Heart right ventricle (tissue), 16 donors: ENCODE measurements at regions of chr4 and their contacts with region 1.

Region 1: GRCh38 chr4:151340751-151341385 is 15.5 kb upstream of the SH3D19 start:
- DNase-seq: no peak
- ATAC-seq: no peak
- H3K4me3 ChIP-seq: no peak overlapping the region
- H3K27ac ChIP-seq: no peak overlapping the region
- H3K4me1 ChIP-seq: no peaks in the 10 kb centered on the region
- H3K27me3 ChIP-seq: no peaks in the 10 kb centered on the region
- CTCF ChIP-seq: no peak

Region 2: GRCh38 chr4:151117371-151117962 is 223.4 kb before region 1 on chr4:
- intact Hi-C with region 1: loop called in 1 of 10 experiments (anchors 10 kb)
- DNase-seq: peak in 1 of 2 donors; percentile 68
- ATAC-seq: peak in 7 of 8 donors; percentile 47 to 66 (median 59)
- H3K4me3 ChIP-seq: no peak overlapping the region
- H3K27ac ChIP-seq: peak overlapping the region in 4 of 10 donors; percentile 20 to 42 (median 34)
- H3K4me1 ChIP-seq: peaks cover 0 to 24% (median 9%) of the 10 kb centered on the region in 9 donors
- H3K27me3 ChIP-seq: no peaks in the 10 kb centered on the region
- CTCF ChIP-seq: peak; percentile 41 to 85 (median 77)

Region 3: GRCh38 chr4:151129801-151130200 is 211.1 kb before region 1 on chr4:
- intact Hi-C with region 1: loop called in 1 of 10 experiments (anchors 10 kb)
- DNase-seq: no peak
- ATAC-seq: peak in 1 of 8 donors; percentile 56
- H3K4me3 ChIP-seq: no peak overlapping the region
- H3K27ac ChIP-seq: peak overlapping the region in 3 of 10 donors; percentile 7 to 20 (median 8)
- H3K4me1 ChIP-seq: peaks cover 0 to 3% (median 0%) of the 10 kb centered on the region in 9 donors
- H3K27me3 ChIP-seq: no peaks in the 10 kb centered on the region
- CTCF ChIP-seq: no peak